Natural killer cell (primary cell): ENCODE measurements at regions of chr14 and their contacts with region 1.

Region 1: DNA sequence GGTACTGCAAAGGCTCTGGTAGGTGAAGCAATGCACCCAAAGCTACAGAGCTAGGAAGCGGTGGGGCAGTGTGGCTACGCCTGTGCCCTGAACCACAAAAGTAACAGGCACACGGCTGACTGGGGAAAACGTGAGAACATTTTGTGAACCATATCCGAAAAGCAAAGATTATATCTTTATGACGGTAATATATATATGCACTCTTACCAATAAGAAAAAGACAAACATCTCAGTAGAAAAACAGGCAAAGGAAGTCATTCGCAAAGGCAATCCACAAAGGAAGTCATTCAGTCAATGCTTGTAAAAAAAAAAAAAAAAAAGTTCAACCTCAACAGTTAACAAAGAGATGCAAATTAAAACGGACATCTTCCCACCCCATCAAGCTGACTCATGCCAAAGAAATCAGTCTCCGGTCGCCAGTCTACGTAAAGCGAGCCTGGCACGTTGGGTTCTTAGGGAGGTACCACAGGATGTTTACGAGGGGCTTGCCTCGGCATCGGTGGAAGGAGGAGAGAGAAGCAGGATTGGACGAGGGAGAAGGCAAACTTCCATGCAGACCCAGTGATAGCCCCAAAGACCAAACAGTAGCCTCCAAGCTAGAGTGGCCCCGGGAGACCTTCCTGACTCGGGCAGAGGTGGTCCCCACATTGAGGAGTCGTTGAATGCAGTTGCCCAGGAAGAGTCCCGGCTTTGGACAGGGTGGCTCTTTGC is 39.4 kb upstream of the PPP2R5C start:
- DNase-seq: peak; percentile 72 to 95
- ATAC-seq: peak; percentile 55 to 81 (median 70)
- H3K4me3 ChIP-seq: peak overlapping the region; percentile 10
- H3K4me3 Mint-ChIP-seq: peak overlapping the region; percentile 90
- H3K27ac ChIP-seq: peak overlapping the region; percentile 95
- H3K27ac Mint-ChIP-seq: peak overlapping the region; percentile 96 to 100
- H3K4me1 ChIP-seq: peaks cover 76% of the 10 kb centered on the region
- H3K4me1 Mint-ChIP-seq: peaks cover 70 to 72% of the 10 kb centered on the region in 2 donors
- H3K27me3 ChIP-seq: no peaks in the 10 kb centered on the region
- H3K27me3 Mint-ChIP-seq: no peaks in the 10 kb centered on the region
- CTCF ChIP-seq: no peak

Region 2: DNA sequence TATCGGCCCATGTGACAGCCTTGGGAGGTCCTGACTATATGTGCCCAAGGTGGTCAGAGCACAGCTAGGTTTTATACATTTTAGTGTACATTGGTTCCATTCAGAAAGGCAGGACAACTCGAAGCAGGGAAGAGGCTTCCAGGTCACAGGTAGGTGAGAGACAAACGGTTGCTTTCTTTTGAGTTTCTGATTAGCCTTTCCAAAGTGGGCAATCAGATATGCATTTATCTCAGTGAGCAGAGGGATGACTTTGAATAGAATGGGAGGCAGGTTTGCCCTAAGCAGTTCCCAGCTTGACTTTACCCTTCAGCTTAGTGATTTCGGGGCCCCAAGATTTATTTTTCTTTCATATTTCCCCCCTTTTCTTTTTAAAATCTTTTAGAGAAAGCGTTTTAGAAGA is 48.2 kb before region 1 on chr14:
- intact Hi-C with region 1: no loop called
- DNase-seq: no peak
- ATAC-seq: no peak
- H3K4me3 ChIP-seq: no peak overlapping the region
- H3K4me3 Mint-ChIP-seq: no peak overlapping the region
- H3K27ac ChIP-seq: no peak overlapping the region
- H3K27ac Mint-ChIP-seq: no peak overlapping the region
- H3K4me1 ChIP-seq: no peaks in the 10 kb centered on the region
- H3K4me1 Mint-ChIP-seq: no peaks in the 10 kb centered on the region
- H3K27me3 ChIP-seq: peaks cover 5% of the 10 kb centered on the region
- H3K27me3 Mint-ChIP-seq: peaks cover 22 to 51% of the 10 kb centered on the region in 2 donors
- CTCF ChIP-seq: no peak

Region 3: GRCh38 chr14:101687756-101688546 is 34.2 kb before region 1 on chr14:
- intact Hi-C with region 1: no loop called
- DNase-seq: no peak
- ATAC-seq: no peak
- H3K4me3 ChIP-seq: no peak overlapping the region
- H3K4me3 Mint-ChIP-seq: no peak overlapping the region
- H3K27ac ChIP-seq: no peak overlapping the region
- H3K27ac Mint-ChIP-seq: no peak overlapping the region
- H3K4me1 ChIP-seq: no peaks in the 10 kb centered on the region
- H3K4me1 Mint-ChIP-seq: no peaks in the 10 kb centered on the region
- H3K27me3 ChIP-seq: no peaks in the 10 kb centered on the region
- H3K27me3 Mint-ChIP-seq: peaks cover 12 to 50% of the 10 kb centered on the region in 2 donors
- CTCF ChIP-seq: no peak

Region 4: DNA sequence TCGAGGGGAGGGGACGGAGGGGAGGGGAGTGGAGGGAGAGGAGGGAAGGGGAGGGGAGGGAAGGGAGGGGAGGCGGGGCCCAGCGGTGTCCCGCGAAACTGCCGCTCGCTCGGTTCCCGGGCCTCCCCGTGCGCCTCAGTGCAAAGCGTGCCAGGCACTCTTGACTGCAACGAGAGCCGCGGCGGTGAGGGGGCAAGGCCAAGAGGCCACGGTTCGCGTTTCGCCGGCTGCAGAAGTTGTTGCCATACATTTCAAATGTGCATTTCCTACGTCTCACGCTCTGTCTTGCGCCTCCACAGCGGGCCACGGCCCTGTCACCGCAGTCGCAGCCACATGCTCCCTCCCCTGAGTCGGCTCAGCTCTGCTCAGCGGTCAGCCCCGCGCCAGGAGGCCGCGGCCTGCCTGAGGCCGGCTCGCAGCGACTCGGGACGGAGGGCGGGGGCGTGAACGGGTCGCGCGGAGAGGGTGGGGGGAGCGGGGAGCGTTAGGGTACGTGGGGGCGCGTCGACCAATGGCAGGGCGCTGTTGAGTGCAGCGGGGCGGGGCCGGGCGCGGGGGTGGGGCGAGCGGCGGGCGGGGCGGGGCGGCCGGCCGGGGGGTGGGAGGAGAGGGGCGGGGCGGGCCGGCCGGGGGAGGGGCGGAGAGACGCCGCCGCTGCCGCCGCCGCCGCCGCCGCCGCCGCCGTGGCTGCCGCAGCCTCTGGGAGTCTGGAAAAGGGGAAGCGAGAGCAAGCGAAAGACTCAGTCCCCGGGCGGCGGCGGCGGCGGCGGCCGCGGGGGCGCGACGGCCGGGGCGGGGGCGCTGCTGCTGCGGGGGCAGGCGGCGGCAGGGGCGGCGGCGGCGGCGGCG is 39.1 kb after region 1 on chr14 and contains the start of gene PPP2R5C:
- intact Hi-C with region 1: loop called (anchors 1 kb)
- DNase-seq: peak; percentile 81 to 93
- ATAC-seq: peak; percentile 63 to 82 (median 71)
- H3K4me3 ChIP-seq: peak within 1 kb of the TSS; percentile 97
- H3K4me3 Mint-ChIP-seq: peak within 1 kb of the TSS; percentile 94
- H3K27ac ChIP-seq: peak within 1 kb of the TSS; percentile 96
- H3K27ac Mint-ChIP-seq: peak within 1 kb of the TSS; percentile 84 to 85
- H3K4me1 ChIP-seq: peaks cover 33% of the 10 kb centered on the region
- H3K4me1 Mint-ChIP-seq: peaks cover 57 to 65% of the 10 kb centered on the region in 2 donors
- H3K27me3 ChIP-seq: no peaks in the 10 kb centered on the region
- H3K27me3 Mint-ChIP-seq: peaks cover 0 to 3% of the 10 kb centered on the region in 2 donors
- CTCF ChIP-seq: no peak
- total RNA-seq, gene PPP2R5C: 716 to 779 (median 736) TPM

Region 5: GRCh38 chr14:101875727-101876554 is 153.8 kb after region 1 on chr14:
- intact Hi-C with region 1: no loop called
- DNase-seq: peak in 1 of 2 donors; percentile 27
- ATAC-seq: no peak
- H3K4me3 ChIP-seq: no peak overlapping the region
- H3K4me3 Mint-ChIP-seq: peak overlapping the region; percentile 76
- H3K27ac ChIP-seq: peak overlapping the region; percentile 86
- H3K27ac Mint-ChIP-seq: peak overlapping the region; percentile 93 to 94
- H3K4me1 ChIP-seq: peaks cover 56% of the 10 kb centered on the region
- H3K4me1 Mint-ChIP-seq: peaks cover 84 to 91% of the 10 kb centered on the region in 2 donors
- H3K27me3 ChIP-seq: no peaks in the 10 kb centered on the region
- H3K27me3 Mint-ChIP-seq: no peaks in the 10 kb centered on the region
- CTCF ChIP-seq: no peak

Region 6: GRCh38 chr14:101992708-101993107 is 270.6 kb after region 1 on chr14:
- intact Hi-C with region 1: no loop called
- DNase-seq: no peak
- ATAC-seq: no peak
- H3K4me3 ChIP-seq: no peak overlapping the region
- H3K4me3 Mint-ChIP-seq: no peak overlapping the region
- H3K27ac ChIP-seq: no peak overlapping the region
- H3K27ac Mint-ChIP-seq: peak overlapping the region in 1 of 2 donors; percentile 59
- H3K4me1 ChIP-seq: no peaks in the 10 kb centered on the region
- H3K4me1 Mint-ChIP-seq: peaks cover 0 to 12% of the 10 kb centered on the region in 2 donors
- H3K27me3 ChIP-seq: no peaks in the 10 kb centered on the region
- H3K27me3 Mint-ChIP-seq: no peaks in the 10 kb centered on the region
- CTCF ChIP-seq: no peak